ENCODE measurements at regions of chr11 and their contacts with region 1.

Region 1: DNA sequence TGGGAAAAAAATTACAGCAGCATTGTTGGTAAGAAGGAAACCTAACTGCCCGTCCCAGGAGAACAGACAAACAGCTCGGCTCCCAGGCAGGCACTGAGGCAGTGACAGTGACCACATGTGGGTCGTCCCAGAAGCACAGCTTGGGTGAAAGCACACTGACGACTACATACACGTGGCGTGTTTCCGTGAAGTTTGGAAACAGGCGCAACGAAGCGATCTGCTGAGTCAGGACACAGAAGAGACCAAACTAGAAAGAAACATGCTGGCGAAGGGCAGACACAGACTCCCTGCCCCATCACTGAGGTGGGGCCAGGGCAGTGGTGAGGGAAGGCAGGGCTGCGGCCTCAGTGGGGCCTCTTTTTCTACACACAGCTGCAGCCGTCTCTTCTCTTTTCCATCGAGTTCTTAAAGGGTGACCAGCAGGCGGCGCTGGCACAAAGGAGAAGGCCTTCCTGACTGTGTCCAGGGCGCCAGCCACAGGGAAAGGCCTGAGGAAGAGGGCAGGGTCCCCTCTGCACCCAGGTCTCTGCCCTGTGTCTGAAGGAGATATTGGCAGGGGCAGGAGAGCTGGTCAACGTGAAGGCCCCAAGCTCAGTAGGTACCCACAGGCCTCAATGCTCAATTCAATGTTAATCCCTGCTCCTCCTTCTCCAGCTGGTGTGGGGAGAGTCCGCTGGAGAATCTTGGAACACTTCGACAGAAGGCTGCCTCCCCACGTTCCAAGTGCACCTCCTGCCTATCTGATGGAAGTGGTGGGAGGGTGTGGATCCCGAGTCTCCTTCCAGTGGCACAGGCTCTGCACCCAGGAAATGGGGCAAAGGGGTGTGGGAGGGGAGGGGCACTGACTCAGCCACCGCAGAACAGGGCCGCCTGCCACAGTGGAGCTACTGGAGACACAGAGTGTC is 19.9 kb downstream of the CARS1 start:
- DNase-seq: peak; percentile 80 to 83
- ATAC-seq: peak; percentile 68 to 90 (median 78)
- H3K4me3 ChIP-seq: no peak overlapping the region
- H3K27ac ChIP-seq: peak overlapping the region in 5 of 10 donors; percentile 10 to 56 (median 22)
- H3K4me1 ChIP-seq: peaks cover 5 to 33% (median 16%) of the 10 kb centered on the region in 9 donors
- H3K27me3 ChIP-seq: no peaks in the 10 kb centered on the region
- CTCF ChIP-seq: peak; percentile 72 to 93 (median 84)

Region 2: GRCh38 chr11:2772544-2773031 is 264.7 kb before region 1 on chr11:
- intact Hi-C with region 1: no loop called
- DNase-seq: no peak
- ATAC-seq: no peak
- H3K4me3 ChIP-seq: no peak overlapping the region
- H3K27ac ChIP-seq: no peak overlapping the region
- H3K4me1 ChIP-seq: peaks cover 0 to 5% (median 2%) of the 10 kb centered on the region in 9 donors
- H3K27me3 ChIP-seq: no peaks in the 10 kb centered on the region
- CTCF ChIP-seq: no peak

Region 3: GRCh38 chr11:3153291-3153861 is 116.1 kb after region 1 on chr11:
- intact Hi-C with region 1: loop called in 1 of 10 experiments (anchors 10 kb)
- DNase-seq: peak; percentile 67 to 74
- ATAC-seq: peak; percentile 46 to 84 (median 74)
- H3K4me3 ChIP-seq: peak overlapping the region in 1 of 10 donors; percentile 7
- H3K27ac ChIP-seq: peak overlapping the region; percentile 12 to 85 (median 66)
- H3K4me1 ChIP-seq: peaks cover 13 to 88% (median 75%) of the 10 kb centered on the region in 9 donors
- H3K27me3 ChIP-seq: no peaks in the 10 kb centered on the region
- CTCF ChIP-seq: no peak

Measured in heart right ventricle (tissue), 16 donors.